ENCODE measurements at regions of chr2 and their contacts with region 1.

Region 1: DNA sequence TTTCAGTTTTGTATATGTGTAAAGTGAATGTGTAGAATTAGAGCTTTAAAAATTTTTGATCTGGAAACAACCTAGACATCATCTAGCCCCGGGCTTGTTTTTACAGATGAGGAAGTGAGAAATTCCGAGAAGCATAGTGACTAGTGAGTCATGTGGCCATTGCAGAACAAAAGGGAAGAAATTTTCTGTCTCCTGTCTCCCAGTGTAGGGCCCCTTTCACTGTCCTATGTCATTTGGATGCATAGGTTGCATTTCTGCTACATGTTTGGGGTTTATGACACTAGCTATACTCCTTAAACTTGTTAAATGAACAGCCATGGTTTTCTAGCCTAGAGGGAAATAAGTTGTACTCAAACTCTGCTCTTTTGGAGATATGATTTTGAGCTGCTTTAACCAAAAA is 84.6 kb downstream of the PLCL1 start:
- DNase-seq: no peak
- ATAC-seq: peak in 3 of 4 donors; percentile 33 to 64 (median 36)
- H3K4me3 ChIP-seq: no peak overlapping the region
- H3K27ac ChIP-seq: peak overlapping the region in 5 of 12 donors; percentile 5 to 77 (median 15)
- H3K4me1 ChIP-seq: peaks cover 1 to 60% (median 36%) of the 10 kb centered on the region in 12 donors
- H3K27me3 ChIP-seq: no peaks in the 10 kb centered on the region
- CTCF ChIP-seq: no peak
- POLR2A ChIP-seq: no peak

Region 2: GRCh38 chr2:197813093-197813787 is 75.8 kb before region 1 on chr2:
- intact Hi-C with region 1: loop called in 5 of 10 experiments (anchors 10 kb)
- DNase-seq: no peak
- ATAC-seq: peak in 1 of 4 donors; percentile 23
- H3K4me3 ChIP-seq: no peak overlapping the region
- H3K27ac ChIP-seq: no peak overlapping the region
- H3K4me1 ChIP-seq: peaks cover 0 to 26% (median 1%) of the 10 kb centered on the region in 12 donors
- H3K27me3 ChIP-seq: no peaks in the 10 kb centered on the region
- CTCF ChIP-seq: peak; percentile 31 to 60 (median 44)
- POLR2A ChIP-seq: no peak

Region 3: GRCh38 chr2:197952540-197953202 is 63.6 kb after region 1 on chr2:
- intact Hi-C with region 1: loop called in 3 of 10 experiments (anchors 5 to 10 kb)
- DNase-seq: no peak
- ATAC-seq: no peak
- H3K4me3 ChIP-seq: no peak overlapping the region
- H3K27ac ChIP-seq: peak overlapping the region in 3 of 12 donors; percentile 2 to 45 (median 4)
- H3K4me1 ChIP-seq: peaks cover 0 to 60% (median 24%) of the 10 kb centered on the region in 12 donors
- H3K27me3 ChIP-seq: no peaks in the 10 kb centered on the region
- CTCF ChIP-seq: no peak
- POLR2A ChIP-seq: no peak

Region 4: DNA sequence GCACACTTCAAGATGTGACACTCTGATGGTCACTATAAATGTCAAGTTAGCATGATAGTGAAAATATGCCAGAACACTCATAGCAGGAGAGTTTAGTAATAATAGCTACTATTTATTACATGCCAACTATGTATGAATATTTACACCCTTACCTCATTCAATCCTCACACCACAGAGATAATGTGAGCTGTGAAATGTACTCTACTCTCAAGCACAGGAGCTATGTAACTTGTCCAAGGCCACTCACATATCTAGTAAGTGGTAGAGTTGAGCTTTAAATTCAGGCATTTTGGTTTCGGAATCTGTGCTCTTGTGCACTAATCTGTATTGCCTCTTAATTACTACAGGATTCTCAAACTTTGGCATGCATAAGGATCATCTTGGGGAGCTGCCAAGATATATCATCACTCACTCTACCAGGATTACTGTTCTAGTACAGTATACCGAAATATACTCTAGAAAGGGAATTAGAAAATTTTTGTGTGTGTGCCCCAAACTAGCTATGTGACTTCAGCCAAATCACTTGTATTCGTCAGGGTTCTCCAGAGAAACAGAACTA is 69.6 kb after region 1 on chr2:
- intact Hi-C with region 1: loop called in 3 of 10 experiments (anchors 5 to 10 kb)
- DNase-seq: no peak
- ATAC-seq: peak; percentile 94 to 98 (median 96)
- H3K4me3 ChIP-seq: no peak overlapping the region
- H3K27ac ChIP-seq: peak overlapping the region in 9 of 12 donors; percentile 20 to 74 (median 44)
- H3K4me1 ChIP-seq: peaks cover 0 to 55% (median 17%) of the 10 kb centered on the region in 12 donors
- H3K27me3 ChIP-seq: no peaks in the 10 kb centered on the region
- CTCF ChIP-seq: no peak
- POLR2A ChIP-seq: no peak

Region 5: GRCh38 chr2:198053776-198054698 is 165.0 kb after region 1 on chr2:
- intact Hi-C with region 1: no loop called
- DNase-seq: peak in 3 of 5 donors; percentile 25 to 34 (median 30)
- ATAC-seq: peak; percentile 33 to 68 (median 54)
- H3K4me3 ChIP-seq: no peak overlapping the region
- H3K27ac ChIP-seq: peak overlapping the region in 9 of 12 donors; percentile 9 to 57 (median 46)
- H3K4me1 ChIP-seq: peaks cover 0 to 45% (median 17%) of the 10 kb centered on the region in 12 donors
- H3K27me3 ChIP-seq: no peaks in the 10 kb centered on the region
- CTCF ChIP-seq: peak in 9 of 12 donors; percentile 14 to 55 (median 39)
- POLR2A ChIP-seq: no peak